ENCODE measurements at regions of chr1 and their contacts with region 1.

Region 1: DNA sequence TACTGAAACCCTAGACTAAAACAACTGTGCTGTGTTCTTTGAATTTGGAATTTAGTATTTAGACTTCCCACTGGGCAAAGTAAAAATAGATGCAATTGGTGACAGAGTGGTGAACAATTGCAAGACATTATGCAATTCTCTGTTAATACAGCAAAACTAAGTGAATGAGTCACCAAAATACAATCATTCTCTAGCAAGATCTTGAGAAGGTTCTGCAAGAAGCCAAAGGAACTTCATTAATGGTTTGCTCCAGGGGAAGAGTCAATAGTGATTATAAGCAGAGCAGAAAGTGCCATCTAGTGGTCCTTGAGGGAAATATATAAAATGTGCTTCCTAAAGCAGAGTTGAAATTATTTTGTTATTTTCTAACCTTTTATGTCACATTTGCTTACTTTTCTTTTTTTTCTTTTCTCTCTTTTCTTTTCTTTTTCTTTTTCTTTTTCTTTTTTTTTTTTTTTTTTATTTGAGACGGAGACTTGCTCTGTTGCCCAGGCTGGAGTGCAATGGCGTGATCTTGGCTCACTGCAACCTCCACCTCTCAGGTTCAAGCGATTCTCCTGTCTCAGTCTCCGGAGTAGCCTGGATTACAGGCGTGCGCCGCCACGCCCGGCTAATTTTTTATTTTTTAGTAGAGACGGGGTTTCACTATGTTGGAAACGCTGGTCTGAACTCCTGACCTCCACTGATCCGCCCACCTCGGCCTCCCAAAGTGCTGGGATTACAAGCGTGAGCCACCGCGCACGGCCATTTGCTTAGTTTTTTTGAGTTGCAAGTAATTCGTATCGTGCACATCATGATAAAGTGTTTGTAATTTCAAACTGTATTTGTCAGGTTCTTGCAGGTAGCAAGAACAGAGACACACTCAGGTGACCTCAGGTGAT is 99.2 kb downstream of the CTH start:
- DNase-seq: peak; percentile 11
- H3K4me3 Mint-ChIP-seq: peak overlapping the region; percentile 55
- H3K27ac Mint-ChIP-seq: no peak overlapping the region
- H3K4me1 Mint-ChIP-seq: no peaks in the 10 kb centered on the region
- H3K27me3 Mint-ChIP-seq: no peaks in the 10 kb centered on the region
- CTCF ChIP-seq: peak; percentile 46

Region 2: GRCh38 chr1:70034403-70034802 is 475.8 kb before region 1 on chr1:
- CTCF ChIA-PET with region 1: no interaction called
- intact Hi-C with region 1: loop called (anchors 5 kb)
- DNase-seq: peak; percentile 23
- H3K4me3 Mint-ChIP-seq: no peak overlapping the region
- H3K27ac Mint-ChIP-seq: no peak overlapping the region
- H3K4me1 Mint-ChIP-seq: no peaks in the 10 kb centered on the region
- H3K27me3 Mint-ChIP-seq: no peaks in the 10 kb centered on the region
- CTCF ChIP-seq: no peak

Region 3: GRCh38 chr1:70134148-70134547 is 376.1 kb before region 1 on chr1:
- CTCF ChIA-PET with region 1: no interaction called
- intact Hi-C with region 1: loop called (anchors 1 kb)
- DNase-seq: no peak
- H3K4me3 Mint-ChIP-seq: no peak overlapping the region
- H3K27ac Mint-ChIP-seq: no peak overlapping the region
- H3K4me1 Mint-ChIP-seq: no peaks in the 10 kb centered on the region
- H3K27me3 Mint-ChIP-seq: no peaks in the 10 kb centered on the region
- CTCF ChIP-seq: no peak

Region 4: GRCh38 chr1:70247768-70248167 is 262.5 kb before region 1 on chr1:
- CTCF ChIA-PET with region 1: no interaction called
- intact Hi-C with region 1: loop called (anchors 10 kb)
- DNase-seq: no peak
- H3K4me3 Mint-ChIP-seq: no peak overlapping the region
- H3K27ac Mint-ChIP-seq: no peak overlapping the region
- H3K4me1 Mint-ChIP-seq: no peaks in the 10 kb centered on the region
- H3K27me3 Mint-ChIP-seq: no peaks in the 10 kb centered on the region
- CTCF ChIP-seq: no peak

Region 5: DNA sequence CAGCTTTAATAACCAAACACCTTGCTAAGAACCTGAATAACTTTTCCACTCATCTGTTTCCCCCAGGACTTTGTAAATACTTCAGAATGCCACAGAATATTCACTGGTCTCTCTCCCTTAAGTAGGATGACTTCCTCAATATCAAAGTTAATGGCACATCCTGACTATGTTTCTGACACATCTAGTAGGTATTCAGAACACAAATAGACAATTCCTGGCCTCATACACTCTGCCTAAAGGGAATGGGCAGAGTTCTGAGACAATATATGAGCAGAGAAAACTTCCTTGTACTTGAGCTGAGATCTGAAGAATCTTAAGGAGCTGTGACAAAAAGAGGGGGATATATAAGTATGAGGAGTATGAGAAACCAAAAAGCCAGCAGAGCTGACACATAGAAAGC is 190.5 kb before region 1 on chr1:
- CTCF ChIA-PET with region 1: no interaction called
- intact Hi-C with region 1: loop called (anchors 5 kb)
- DNase-seq: no peak
- H3K4me3 Mint-ChIP-seq: no peak overlapping the region
- H3K27ac Mint-ChIP-seq: peak overlapping the region; percentile 16
- H3K4me1 Mint-ChIP-seq: peaks cover 25% of the 10 kb centered on the region
- H3K27me3 Mint-ChIP-seq: no peaks in the 10 kb centered on the region
- CTCF ChIP-seq: no peak

Region 6: GRCh38 chr1:70431317-70431716 is 78.9 kb before region 1 on chr1:
- CTCF ChIA-PET with region 1: no interaction called
- intact Hi-C with region 1: loop called (anchors 5 kb)
- DNase-seq: no peak
- H3K4me3 Mint-ChIP-seq: no peak overlapping the region
- H3K27ac Mint-ChIP-seq: no peak overlapping the region
- H3K4me1 Mint-ChIP-seq: peaks cover 25% of the 10 kb centered on the region
- H3K27me3 Mint-ChIP-seq: no peaks in the 10 kb centered on the region
- CTCF ChIP-seq: no peak